Naive thymus-derived CD4-positive, alpha-beta T cell (primary cell): ENCODE measurements at regions of chr12 and their contacts with region 1.

Region 1: GRCh38 chr12:28383368-28383767 is 193.1 kb downstream of the CCDC91 start:
- DNase-seq: no peak
- ATAC-seq: no peak
- H3K4me3 ChIP-seq: no peak overlapping the region
- H3K4me3 Mint-ChIP-seq: no peak overlapping the region
- H3K27ac ChIP-seq: no peak overlapping the region
- H3K27ac Mint-ChIP-seq: no peak overlapping the region
- H3K4me1 ChIP-seq: no peaks in the 10 kb centered on the region
- H3K4me1 Mint-ChIP-seq: peaks cover 0 to 3% (median 0%) of the 10 kb centered on the region in 7 donors
- H3K27me3 ChIP-seq: no peaks in the 10 kb centered on the region
- H3K27me3 Mint-ChIP-seq: no peaks in the 10 kb centered on the region

Region 2: GRCh38 chr12:27999521-27999920 is 383.8 kb before region 1 on chr12:
- CTCF ChIA-PET with region 1: no interaction called
- POLR2A ChIA-PET with region 1: no interaction called
- intact Hi-C with region 1: loop called in 1 of 2 experiments (anchors 5 kb)
- DNase-seq: no peak
- ATAC-seq: no peak
- H3K4me3 ChIP-seq: no peak overlapping the region
- H3K4me3 Mint-ChIP-seq: no peak overlapping the region
- H3K27ac ChIP-seq: no peak overlapping the region
- H3K27ac Mint-ChIP-seq: no peak overlapping the region
- H3K4me1 ChIP-seq: no peaks in the 10 kb centered on the region
- H3K4me1 Mint-ChIP-seq: no peaks in the 10 kb centered on the region
- H3K27me3 ChIP-seq: no peaks in the 10 kb centered on the region
- H3K27me3 Mint-ChIP-seq: peaks cover 0 to 6% (median 3%) of the 10 kb centered on the region in 5 donors

Region 3: GRCh38 chr12:28145216-28145615 is 238.2 kb before region 1 on chr12:
- CTCF ChIA-PET with region 1: no interaction called
- POLR2A ChIA-PET with region 1: no interaction called
- intact Hi-C with region 1: no loop called
- DNase-seq: no peak
- ATAC-seq: no peak
- H3K4me3 ChIP-seq: no peak overlapping the region
- H3K4me3 Mint-ChIP-seq: no peak overlapping the region
- H3K27ac ChIP-seq: no peak overlapping the region
- H3K27ac Mint-ChIP-seq: no peak overlapping the region
- H3K4me1 ChIP-seq: no peaks in the 10 kb centered on the region
- H3K4me1 Mint-ChIP-seq: no peaks in the 10 kb centered on the region
- H3K27me3 ChIP-seq: no peaks in the 10 kb centered on the region
- H3K27me3 Mint-ChIP-seq: peaks cover 0 to 9% (median under 1%) of the 10 kb centered on the region in 5 donors

Region 4: GRCh38 chr12:28290262-28290661 is 93.1 kb before region 1 on chr12:
- CTCF ChIA-PET with region 1: no interaction called
- POLR2A ChIA-PET with region 1: no interaction called
- intact Hi-C with region 1: no loop called
- DNase-seq: no peak
- ATAC-seq: no peak
- H3K4me3 ChIP-seq: no peak overlapping the region
- H3K4me3 Mint-ChIP-seq: peak overlapping the region in 1 of 10 donors; percentile 15
- H3K27ac ChIP-seq: no peak overlapping the region
- H3K27ac Mint-ChIP-seq: peak overlapping the region in 1 of 9 donors; percentile 54
- H3K4me1 ChIP-seq: no peaks in the 10 kb centered on the region
- H3K4me1 Mint-ChIP-seq: peaks cover 0 to 32% (median 19%) of the 10 kb centered on the region in 7 donors
- H3K27me3 ChIP-seq: no peaks in the 10 kb centered on the region
- H3K27me3 Mint-ChIP-seq: no peaks in the 10 kb centered on the region